Caco-2 (cell line): ENCODE measurements at regions of chr14 and their contacts with region 1.

Region 1: DNA sequence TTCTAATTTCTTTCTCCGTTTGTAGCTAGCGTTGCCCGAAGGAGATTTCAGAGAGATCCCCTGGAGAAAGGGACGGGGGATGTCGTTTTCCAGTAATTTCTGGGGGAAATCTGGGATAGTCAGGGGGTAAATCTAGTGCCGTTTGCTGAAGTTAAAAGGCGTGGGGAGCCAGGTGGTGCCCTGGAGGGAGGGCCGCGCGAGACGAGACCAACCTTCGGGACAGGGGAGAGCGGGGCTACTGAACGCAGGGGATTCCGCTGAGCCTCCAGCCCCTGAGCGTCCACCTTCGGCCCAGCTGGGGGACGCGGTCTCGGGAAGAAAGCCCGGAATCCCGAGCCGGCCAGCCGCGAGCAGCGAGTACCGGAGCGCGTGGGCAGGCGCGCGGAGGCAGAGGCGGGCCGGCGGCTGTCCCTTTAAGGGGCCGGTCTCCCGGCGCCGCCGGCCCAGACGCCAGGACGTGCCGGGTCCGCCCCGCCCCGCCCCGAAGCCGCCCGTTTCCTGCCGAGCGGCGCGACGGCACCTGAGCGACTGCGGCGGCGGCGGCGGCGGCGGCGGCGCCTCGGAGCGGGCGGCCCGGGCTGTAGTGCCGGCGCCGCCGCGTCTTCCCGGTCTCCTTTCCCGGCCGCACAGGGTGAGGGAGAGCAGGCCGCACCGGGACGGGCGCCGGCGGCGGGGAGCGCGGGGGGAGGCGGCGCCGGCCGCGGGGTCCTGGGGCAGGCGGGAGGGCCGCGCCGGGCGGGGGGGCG is at the start of gene KTN1:
- DNase-seq: peak; percentile 81 to 92
- H3K4me3 ChIP-seq: peak within 1 kb of the TSS; percentile 91
- H3K4me3 Mint-ChIP-seq: peak within 1 kb of the TSS; percentile 96
- H3K27ac Mint-ChIP-seq: peak within 1 kb of the TSS; percentile 86
- H3K4me1 ChIP-seq: peaks cover 13% of the 10 kb centered on the region
- H3K4me1 Mint-ChIP-seq: no peaks in the 10 kb centered on the region
- H3K27me3 ChIP-seq: no peaks in the 10 kb centered on the region
- H3K27me3 Mint-ChIP-seq: no peaks in the 10 kb centered on the region
- CTCF ChIP-seq: no peak
- total RNA-seq, gene KTN1: 130 and 138 TPM in 2 replicates

Region 2: DNA sequence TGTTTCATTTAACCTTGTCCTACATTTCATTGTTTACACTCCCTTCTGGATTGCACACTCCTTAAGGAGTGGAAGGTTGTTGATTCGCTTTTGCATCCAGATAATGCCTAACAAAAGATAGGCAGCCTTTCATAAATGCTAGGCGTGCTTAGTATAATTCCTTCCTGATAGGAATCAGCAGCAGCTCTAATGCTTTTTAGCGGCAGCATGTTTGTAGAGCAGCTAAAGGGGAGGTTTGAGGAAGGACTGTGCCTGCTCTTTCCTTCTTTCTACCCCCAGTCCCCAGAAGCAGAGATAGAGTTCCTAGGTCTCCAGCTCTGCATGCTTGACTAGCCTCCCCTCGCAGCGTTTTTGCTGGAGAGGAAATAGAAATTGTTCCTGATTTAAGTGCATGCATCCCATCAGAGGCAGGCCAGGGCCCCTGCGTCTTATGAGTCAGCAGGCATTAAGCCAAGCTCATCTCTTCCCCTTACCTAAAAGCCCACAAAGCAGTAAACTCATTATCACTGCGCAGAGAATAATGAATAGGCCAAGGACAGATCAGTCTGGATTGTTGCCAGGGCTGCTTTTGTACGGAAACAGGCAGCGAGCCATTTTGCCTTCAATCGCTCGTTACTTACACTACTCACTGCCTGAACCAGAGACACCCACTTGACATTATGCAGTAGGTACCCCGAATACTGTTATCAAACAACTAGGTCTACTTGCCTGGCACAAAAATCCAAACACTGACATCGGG is 125.5 kb before region 1 on chr14:
- CTCF ChIA-PET with region 1: no interaction called
- POLR2A ChIA-PET with region 1: no interaction called
- intact Hi-C with region 1: loop called (anchors 5 kb)
- DNase-seq: no peak
- H3K4me3 ChIP-seq: no peak overlapping the region
- H3K4me3 Mint-ChIP-seq: no peak overlapping the region
- H3K27ac Mint-ChIP-seq: peak overlapping the region; percentile 5
- H3K4me1 ChIP-seq: peaks cover 12% of the 10 kb centered on the region
- H3K4me1 Mint-ChIP-seq: peaks cover 15% of the 10 kb centered on the region
- H3K27me3 ChIP-seq: no peaks in the 10 kb centered on the region
- H3K27me3 Mint-ChIP-seq: no peaks in the 10 kb centered on the region
- CTCF ChIP-seq: no peak

Region 3: DNA sequence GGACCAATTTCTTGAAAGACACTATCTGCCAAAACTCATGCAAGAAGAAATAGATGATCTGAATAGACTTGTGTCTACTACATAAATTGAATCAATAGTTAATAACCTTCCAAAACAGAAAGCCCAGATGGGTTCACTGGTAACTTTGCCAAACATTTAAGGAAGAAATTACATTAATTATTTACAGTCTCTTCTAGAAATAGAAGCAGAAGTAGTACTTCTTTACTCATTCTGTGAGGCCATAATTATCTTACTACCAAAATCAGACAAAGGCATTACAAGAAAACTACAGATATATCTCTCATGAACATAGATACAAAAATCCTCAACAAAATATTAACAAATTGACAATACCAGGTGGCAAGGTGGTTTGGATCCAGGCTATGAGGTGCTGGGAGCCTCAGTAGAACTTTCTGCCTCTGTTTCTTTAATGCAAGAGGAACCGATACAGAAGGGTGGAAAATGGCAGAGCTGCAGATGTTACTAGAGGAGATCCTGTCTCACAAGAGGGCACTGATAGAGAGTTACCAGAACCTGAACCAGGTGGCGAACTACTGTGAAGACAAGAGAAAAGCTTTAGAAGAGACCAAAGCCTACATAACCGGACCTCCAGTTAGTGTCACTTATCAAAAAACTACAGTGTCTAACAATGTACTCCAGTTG is 33.6 kb before region 1 on chr14:
- CTCF ChIA-PET with region 1: interaction called, 3 read pairs
- POLR2A ChIA-PET with region 1: interaction called, 6 read pairs
- intact Hi-C with region 1: loop called (anchors 2 kb)
- DNase-seq: no peak
- H3K4me3 ChIP-seq: no peak overlapping the region
- H3K4me3 Mint-ChIP-seq: no peak overlapping the region
- H3K27ac Mint-ChIP-seq: no peak overlapping the region
- H3K4me1 ChIP-seq: peaks cover 23% of the 10 kb centered on the region
- H3K4me1 Mint-ChIP-seq: peaks cover 31% of the 10 kb centered on the region
- H3K27me3 ChIP-seq: no peaks in the 10 kb centered on the region
- H3K27me3 Mint-ChIP-seq: no peaks in the 10 kb centered on the region
- CTCF ChIP-seq: no peak

Region 4: DNA sequence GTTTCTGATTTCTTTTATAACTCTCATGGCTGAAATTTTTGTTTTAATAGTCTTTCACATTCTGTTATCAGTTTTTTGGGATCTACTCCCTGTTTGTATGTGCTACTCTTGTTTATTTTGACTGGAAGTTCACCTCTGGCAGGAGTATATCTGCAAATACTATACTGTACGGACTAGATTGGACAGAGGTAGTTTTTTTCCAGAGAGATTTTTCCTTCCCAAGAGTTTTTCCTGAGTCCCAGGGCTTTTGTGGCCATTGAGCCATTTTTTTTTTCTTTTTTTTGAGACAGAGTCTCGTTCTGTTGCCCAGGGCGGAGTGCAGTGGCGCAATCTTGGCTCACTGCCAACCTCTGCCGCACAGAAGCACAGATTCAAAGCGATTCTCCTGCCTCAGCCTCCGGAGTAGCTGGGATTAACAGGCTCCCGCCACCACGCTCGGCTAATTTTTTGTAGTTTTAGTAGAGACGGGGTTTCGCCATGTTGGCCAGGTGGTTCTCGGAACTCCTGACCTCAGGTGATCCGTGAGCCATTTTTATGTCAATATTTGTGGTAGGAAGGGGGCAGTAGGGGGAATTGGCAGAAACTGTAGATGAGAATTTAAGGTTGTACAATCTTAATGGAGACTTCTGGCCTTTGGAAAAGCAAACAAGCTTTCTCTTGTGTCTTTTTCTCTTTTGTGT is 19.4 kb after region 1 on chr14:
- CTCF ChIA-PET with region 1: no interaction called
- POLR2A ChIA-PET with region 1: no interaction called
- intact Hi-C with region 1: loop called (anchors 1 kb)
- DNase-seq: peak; percentile 75 to 82
- H3K4me3 ChIP-seq: peak overlapping the region; percentile 28
- H3K4me3 Mint-ChIP-seq: peak overlapping the region; percentile 73
- H3K27ac Mint-ChIP-seq: peak overlapping the region; percentile 71
- H3K4me1 ChIP-seq: peaks cover 11% of the 10 kb centered on the region
- H3K4me1 Mint-ChIP-seq: peaks cover 7% of the 10 kb centered on the region
- H3K27me3 ChIP-seq: no peaks in the 10 kb centered on the region
- H3K27me3 Mint-ChIP-seq: no peaks in the 10 kb centered on the region
- CTCF ChIP-seq: no peak

Region 5: GRCh38 chr14:55689981-55690863 is 110.3 kb after region 1 on chr14:
- CTCF ChIA-PET with region 1: no interaction called
- POLR2A ChIA-PET with region 1: no interaction called
- intact Hi-C with region 1: no loop called
- DNase-seq: no peak
- H3K4me3 ChIP-seq: no peak overlapping the region
- H3K4me3 Mint-ChIP-seq: no peak overlapping the region
- H3K27ac Mint-ChIP-seq: no peak overlapping the region
- H3K4me1 ChIP-seq: no peaks in the 10 kb centered on the region
- H3K4me1 Mint-ChIP-seq: no peaks in the 10 kb centered on the region
- H3K27me3 ChIP-seq: no peaks in the 10 kb centered on the region
- H3K27me3 Mint-ChIP-seq: no peaks in the 10 kb centered on the region
- CTCF ChIP-seq: no peak